WTC11 (cell line): ENCODE measurements at regions of chr3 and their contacts with region 1.

Region 1: GRCh38 chr3:60742606-60743145 is 508.6 kb downstream of the FHIT start:
- DNase-seq: peak; percentile 77
- ATAC-seq: peak; percentile 91
- H3K4me3 Mint-ChIP-seq: no peak overlapping the region
- H3K27ac Mint-ChIP-seq: no peak overlapping the region
- H3K4me1 Mint-ChIP-seq: peaks cover 59% of the 10 kb centered on the region
- H3K27me3 Mint-ChIP-seq: peaks cover 14% of the 10 kb centered on the region; the same call in 1 of the 2 replicates
- CTCF ChIP-seq: peak; percentile 27; the same call in 1 of the 2 replicates

Region 2: GRCh38 chr3:60399861-60400845 is 342.5 kb before region 1 on chr3:
- CTCF ChIA-PET with region 1: interaction called, 10 read pairs
- POLR2A ChIA-PET with region 1: no interaction called
- DNase-seq: no peak
- ATAC-seq: no peak
- H3K4me3 Mint-ChIP-seq: no peak overlapping the region
- H3K27ac Mint-ChIP-seq: no peak overlapping the region
- H3K4me1 Mint-ChIP-seq: peaks cover 36% of the 10 kb centered on the region
- H3K27me3 Mint-ChIP-seq: no peaks in the 10 kb centered on the region
- CTCF ChIP-seq: no peak

Region 3: GRCh38 chr3:60431599-60431958 is 311.1 kb before region 1 on chr3:
- CTCF ChIA-PET with region 1: interaction called, 18 read pairs
- POLR2A ChIA-PET with region 1: no interaction called
- DNase-seq: peak; percentile 17
- ATAC-seq: peak; percentile 90
- H3K4me3 Mint-ChIP-seq: no peak overlapping the region
- H3K27ac Mint-ChIP-seq: no peak overlapping the region
- H3K4me1 Mint-ChIP-seq: peaks cover 14% of the 10 kb centered on the region
- H3K27me3 Mint-ChIP-seq: no peaks in the 10 kb centered on the region
- CTCF ChIP-seq: no peak

Region 4: DNA sequence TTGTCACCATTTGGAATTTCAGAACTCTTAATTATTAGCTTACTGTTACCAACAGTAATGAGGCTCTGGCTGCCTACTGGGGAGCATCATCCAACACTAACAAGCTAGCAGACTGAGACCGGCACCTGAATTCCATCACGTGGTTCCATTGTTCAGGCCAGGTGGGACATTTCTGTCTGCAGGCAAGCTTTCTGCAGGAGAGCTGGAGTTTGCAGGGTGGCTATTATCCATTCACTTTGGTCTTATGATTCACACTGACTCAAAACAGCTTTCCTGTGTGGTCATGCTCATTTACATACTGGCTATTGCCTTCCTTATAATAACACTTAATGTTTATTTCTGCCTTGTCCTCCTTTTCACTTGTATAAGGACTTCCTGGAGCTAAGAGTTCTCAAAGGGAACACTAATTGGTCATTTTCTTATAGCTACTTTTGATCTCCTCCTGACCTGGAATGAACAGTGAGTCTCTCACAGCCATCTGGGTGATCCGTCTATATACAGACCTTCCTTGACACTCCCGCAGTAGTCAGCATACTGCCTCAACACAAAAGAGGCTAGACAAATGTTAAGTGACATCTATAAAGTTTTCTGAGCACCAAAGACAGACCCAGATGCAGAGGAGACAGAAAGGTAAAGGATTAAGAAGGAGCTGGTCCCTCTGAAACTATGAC is 186.9 kb before region 1 on chr3:
- CTCF ChIA-PET with region 1: interaction called, 13 read pairs
- POLR2A ChIA-PET with region 1: no interaction called
- DNase-seq: peak; percentile 46
- ATAC-seq: peak; percentile 89
- H3K4me3 Mint-ChIP-seq: no peak overlapping the region
- H3K27ac Mint-ChIP-seq: peak overlapping the region; percentile 88
- H3K4me1 Mint-ChIP-seq: peaks cover 34% of the 10 kb centered on the region
- H3K27me3 Mint-ChIP-seq: peaks cover 30% of the 10 kb centered on the region
- CTCF ChIP-seq: no peak

Region 5: DNA sequence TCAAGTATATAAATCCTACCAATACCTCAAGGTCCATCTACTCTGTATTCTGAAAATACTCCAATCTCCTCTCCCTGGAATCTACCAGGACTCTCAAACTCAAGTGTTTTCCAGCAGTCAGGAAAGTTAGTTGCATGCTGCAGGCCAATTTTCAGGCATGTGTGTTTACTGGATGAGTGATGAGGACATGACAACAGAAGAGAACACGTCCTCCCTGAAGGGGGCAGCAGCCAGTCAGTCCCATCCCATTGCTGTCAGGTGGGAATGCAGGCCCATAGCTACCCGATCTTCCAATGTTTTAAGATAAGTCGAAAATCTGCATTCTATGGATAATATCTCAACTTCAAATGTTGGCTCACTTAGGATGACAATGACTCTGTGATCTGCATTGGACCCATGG is 12.4 kb after region 1 on chr3:
- CTCF ChIA-PET with region 1: interaction called, 28 read pairs
- POLR2A ChIA-PET with region 1: no interaction called
- DNase-seq: peak; percentile 71
- ATAC-seq: peak; percentile 96
- H3K4me3 Mint-ChIP-seq: no peak overlapping the region
- H3K27ac Mint-ChIP-seq: no peak overlapping the region
- H3K4me1 Mint-ChIP-seq: peaks cover 43% of the 10 kb centered on the region
- H3K27me3 Mint-ChIP-seq: peaks cover 2% of the 10 kb centered on the region; the same call in 1 of the 2 replicates
- CTCF ChIP-seq: peak; percentile 43